Transverse colon (tissue), 4 donors: ENCODE measurements at regions of chr12 and their contacts with region 1.

Region 1: DNA sequence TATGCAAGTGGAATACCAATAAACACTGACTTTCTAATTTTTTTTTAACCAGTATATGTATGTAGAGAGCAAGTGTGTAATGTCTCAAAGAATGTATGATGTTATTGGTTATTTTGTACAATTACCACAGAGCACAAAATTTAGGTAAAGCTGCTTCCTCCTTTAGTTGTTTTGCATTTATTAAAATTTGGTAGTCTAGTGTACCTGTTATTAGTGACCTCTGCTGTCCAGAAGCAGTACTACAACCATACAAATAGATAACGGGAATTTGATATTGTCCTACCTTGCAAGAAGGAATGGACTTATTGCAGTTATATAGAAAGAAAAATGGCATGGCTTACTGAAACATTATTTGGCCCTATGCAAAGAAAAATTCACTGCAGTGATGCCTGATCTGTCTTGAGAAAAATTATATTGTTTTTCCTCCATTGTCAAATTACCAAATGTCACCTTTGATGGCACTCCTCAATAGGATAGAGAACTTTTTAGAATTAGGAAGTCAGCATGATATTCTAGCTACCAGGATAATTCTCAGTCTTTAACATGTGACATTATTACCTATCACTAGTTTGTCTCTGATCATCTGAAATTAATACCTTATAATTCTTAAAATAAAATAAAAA is 153.9 kb upstream of the RMST start:
- DNase-seq: no peak
- H3K4me3 ChIP-seq: no peak overlapping the region
- H3K27ac ChIP-seq: no peak overlapping the region
- H3K4me1 ChIP-seq: no peaks in the 10 kb centered on the region
- H3K27me3 ChIP-seq: no peaks in the 10 kb centered on the region
- CTCF ChIP-seq: peak; percentile 45 to 72 (median 60)
- EP300 ChIP-seq: no peak
- POLR2A ChIP-seq: no peak

Region 2: DNA sequence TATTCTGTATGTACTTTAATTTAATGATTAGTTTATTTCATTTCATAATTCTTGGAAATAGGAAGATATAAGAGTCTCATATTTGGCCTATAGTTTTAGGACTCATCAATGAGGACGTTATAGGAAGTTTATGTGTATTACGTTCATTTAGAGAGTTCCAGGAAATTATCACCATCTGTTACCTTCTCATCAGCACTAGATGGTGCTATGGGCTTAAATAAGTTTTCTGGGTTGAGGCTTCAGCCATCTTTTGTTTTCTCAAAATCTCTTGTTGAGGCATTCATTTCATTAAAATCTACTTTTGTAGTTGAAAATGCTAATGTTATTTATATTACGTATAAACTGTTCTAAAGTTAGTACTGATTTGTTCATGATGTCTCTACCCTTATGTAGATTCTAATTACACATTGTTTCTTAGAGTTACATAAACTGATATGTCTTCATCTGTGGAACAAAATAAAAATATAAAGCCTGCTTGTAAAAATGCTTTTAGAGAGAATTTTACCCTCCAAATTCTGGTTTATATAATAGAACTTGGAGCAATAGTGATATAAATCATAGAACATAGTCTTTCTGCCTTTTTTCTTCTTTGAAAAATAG is 730.1 kb before region 1 on chr12:
- in situ Hi-C with region 1: loop called (anchors 10 to 25 kb)
- intact Hi-C with region 1: loop called (anchors 10 kb)
- DNase-seq: no peak
- H3K4me3 ChIP-seq: no peak overlapping the region
- H3K27ac ChIP-seq: no peak overlapping the region
- H3K4me1 ChIP-seq: no peaks in the 10 kb centered on the region
- H3K27me3 ChIP-seq: no peaks in the 10 kb centered on the region
- CTCF ChIP-seq: peak; percentile 41 to 55 (median 48)
- EP300 ChIP-seq: no peak
- POLR2A ChIP-seq: no peak

Region 3: DNA sequence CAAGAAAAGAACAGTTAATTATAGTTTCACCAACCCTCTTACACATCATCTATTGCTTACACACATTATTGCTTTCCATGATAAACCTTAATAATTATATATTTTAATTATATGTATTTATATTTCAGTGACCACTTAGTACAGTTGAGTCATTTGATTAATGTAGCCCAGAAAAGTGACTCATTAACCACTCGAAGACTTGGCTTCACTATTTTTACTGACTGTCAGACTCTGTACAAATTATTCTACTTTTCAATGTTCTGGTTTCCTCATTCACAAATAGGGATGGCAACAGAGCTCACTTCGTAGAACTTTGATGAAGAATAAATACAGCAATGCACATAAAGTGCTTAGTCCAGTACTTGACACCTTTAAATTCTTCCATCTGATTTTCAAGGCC is 721.0 kb before region 1 on chr12:
- in situ Hi-C with region 1: loop called (anchors 10 to 25 kb)
- intact Hi-C with region 1: loop called (anchors 10 kb)
- DNase-seq: no peak
- H3K4me3 ChIP-seq: no peak overlapping the region
- H3K27ac ChIP-seq: no peak overlapping the region
- H3K4me1 ChIP-seq: no peaks in the 10 kb centered on the region
- H3K27me3 ChIP-seq: no peaks in the 10 kb centered on the region
- CTCF ChIP-seq: no peak
- EP300 ChIP-seq: no peak
- POLR2A ChIP-seq: no peak

Region 4: DNA sequence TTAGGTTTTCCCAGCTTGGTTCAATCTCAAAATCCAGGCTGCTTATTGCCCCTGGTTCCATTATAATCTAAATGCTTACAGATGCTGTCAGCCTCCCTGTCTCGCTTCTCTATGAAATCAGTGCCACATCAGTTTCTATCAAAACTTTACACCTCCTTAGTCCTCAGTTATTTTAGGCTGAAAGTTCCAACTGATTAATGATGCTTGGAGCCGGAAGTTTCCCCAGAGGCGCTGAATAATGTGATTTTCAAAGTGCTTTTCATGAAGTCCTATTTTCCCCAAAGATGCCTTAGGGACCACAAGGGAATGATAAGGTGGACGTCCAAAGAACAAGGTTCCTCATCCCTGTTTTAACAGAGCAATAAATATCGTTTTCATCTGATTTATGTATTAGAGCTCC is 108.5 kb before region 1 on chr12:
- in situ Hi-C with region 1: no loop called
- intact Hi-C with region 1: no loop called
- DNase-seq: no peak
- H3K4me3 ChIP-seq: no peak overlapping the region
- H3K27ac ChIP-seq: no peak overlapping the region
- H3K4me1 ChIP-seq: no peaks in the 10 kb centered on the region
- H3K27me3 ChIP-seq: no peaks in the 10 kb centered on the region
- CTCF ChIP-seq: no peak
- EP300 ChIP-seq: no peak
- POLR2A ChIP-seq: no peak